Psoas muscle (tissue), 8 donors: ENCODE measurements at regions of chr1 and their contacts with region 1.

Region 1: GRCh38 chr1:210143465-210144062 is 89.0 kb upstream of the SERTAD4 start:
- DNase-seq: peak; percentile 69 to 71
- ATAC-seq: no peak
- H3K4me3 ChIP-seq: no peak overlapping the region
- H3K27ac ChIP-seq: no peak overlapping the region
- H3K4me1 ChIP-seq: no peaks in the 10 kb centered on the region
- H3K27me3 ChIP-seq: peaks cover 0 to 2% (median 0%) of the 10 kb centered on the region in 3 donors
- CTCF ChIP-seq: peak; percentile 67

Region 2: DNA sequence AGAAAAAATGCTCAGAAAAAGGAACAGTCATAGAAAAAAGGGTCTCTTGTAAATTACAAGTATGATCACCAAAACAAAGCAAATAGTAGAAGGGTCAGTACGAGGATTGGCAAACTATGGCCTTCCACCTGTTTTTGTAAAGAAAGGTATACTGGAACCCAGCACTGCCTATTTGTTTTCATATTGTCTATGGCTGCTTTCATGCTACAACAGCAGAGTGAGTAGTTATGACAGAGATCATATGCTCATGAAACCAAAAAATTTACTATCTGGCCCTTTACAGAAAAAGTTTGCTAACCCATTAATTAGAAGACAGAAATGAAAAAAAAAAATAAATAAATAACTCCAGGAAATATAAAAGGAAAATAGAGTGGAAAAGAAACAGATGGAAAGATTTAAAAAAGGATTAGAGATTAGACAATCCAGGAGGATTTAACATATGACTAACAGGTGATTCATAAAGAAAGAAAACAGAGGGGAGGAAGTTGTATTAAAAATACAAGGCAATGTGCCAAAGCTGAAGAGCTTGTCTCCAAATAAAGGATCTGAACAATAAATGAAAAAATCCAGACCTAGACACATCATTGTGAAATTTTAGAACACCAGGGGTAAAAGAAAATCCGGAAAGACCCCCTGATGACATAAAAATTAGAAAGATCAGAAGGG is 19.5 kb before region 1 on chr1:
- intact Hi-C with region 1: no loop called
- DNase-seq: no peak
- ATAC-seq: no peak
- H3K4me3 ChIP-seq: no peak overlapping the region
- H3K27ac ChIP-seq: no peak overlapping the region
- H3K4me1 ChIP-seq: no peaks in the 10 kb centered on the region
- H3K27me3 ChIP-seq: peaks cover 0 to 4% (median 0%) of the 10 kb centered on the region in 3 donors
- CTCF ChIP-seq: no peak

Region 3: DNA sequence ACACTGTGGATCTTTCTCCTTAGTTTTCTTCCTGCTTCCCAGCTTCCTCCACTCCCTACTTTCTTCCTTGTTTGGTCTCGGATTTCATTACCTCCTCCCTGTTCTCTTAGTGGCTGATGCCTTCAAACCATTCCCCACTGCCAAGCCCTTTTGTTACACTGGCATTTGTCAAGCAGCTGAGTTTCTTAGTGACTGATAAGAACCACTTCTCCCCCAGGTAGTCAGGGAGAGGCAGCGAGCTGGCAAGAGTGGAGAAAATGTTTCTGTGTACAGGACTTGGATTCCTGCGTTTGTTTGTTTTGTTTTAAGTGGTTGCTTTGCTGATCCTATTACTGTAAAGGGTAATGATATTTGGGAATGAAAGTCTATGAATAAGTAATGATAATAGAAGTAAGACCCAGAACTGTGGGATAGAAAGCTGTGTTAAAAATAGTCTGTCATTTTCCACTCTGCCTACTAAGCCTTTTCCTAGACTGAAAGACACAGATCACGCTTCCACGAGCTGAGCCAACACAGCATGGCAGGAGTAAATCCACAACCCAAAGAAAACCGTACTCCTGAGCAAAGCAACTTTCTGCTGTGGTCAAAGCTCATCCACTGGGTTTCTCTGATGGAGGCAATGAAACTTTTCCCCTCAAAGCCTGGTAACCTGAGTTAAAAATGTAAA is 78.9 kb after region 1 on chr1:
- intact Hi-C with region 1: no loop called
- DNase-seq: no peak
- ATAC-seq: no peak
- H3K4me3 ChIP-seq: no peak overlapping the region
- H3K27ac ChIP-seq: no peak overlapping the region
- H3K4me1 ChIP-seq: no peaks in the 10 kb centered on the region
- H3K27me3 ChIP-seq: peaks cover under 1 to 8% (median 3%) of the 10 kb centered on the region in 3 donors
- CTCF ChIP-seq: no peak

Region 4: DNA sequence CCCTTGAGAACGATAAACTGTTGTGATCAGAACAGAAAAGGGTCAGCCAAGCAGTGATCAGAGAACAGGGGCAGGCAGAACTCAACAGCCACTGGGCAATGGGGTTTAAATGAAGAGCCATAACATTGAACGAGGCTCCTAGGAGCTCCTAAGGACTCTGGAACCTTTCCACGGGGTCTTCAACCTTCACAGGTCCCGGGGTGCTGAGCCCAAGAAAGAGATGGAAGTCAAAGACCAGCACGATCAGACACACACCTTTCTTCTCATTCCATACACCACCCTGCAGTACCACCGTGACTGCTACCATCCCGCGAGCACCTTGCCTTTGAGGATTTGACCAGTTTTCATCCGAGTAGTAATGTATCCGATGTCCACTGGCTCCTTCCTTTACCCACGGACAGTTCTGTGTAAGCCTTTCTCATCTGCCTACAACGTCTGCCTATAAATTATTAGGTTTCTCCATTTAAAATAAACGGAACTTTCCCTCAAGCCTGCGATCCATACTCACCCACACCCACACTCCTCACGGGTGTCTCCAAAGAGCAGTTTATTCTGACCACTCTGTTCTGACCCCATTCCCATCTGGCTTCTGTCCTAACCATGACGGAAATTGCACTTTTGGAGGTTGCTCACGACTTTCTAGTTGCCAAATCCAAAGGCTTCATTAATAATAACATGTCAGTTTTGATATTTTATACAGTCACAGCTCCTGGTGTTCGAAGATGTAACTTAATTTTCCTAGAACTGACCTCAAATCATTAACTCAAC is 168.3 kb after region 1 on chr1:
- intact Hi-C with region 1: loop called (anchors 1 to 5 kb)
- DNase-seq: no peak
- ATAC-seq: peak in 2 of 4 donors; percentile 35 to 63
- H3K4me3 ChIP-seq: peak overlapping the region; percentile 42
- H3K27ac ChIP-seq: peak overlapping the region; percentile 41
- H3K4me1 ChIP-seq: no peaks in the 10 kb centered on the region
- H3K27me3 ChIP-seq: no peaks in the 10 kb centered on the region
- CTCF ChIP-seq: no peak